Esophagus squamous epithelium (tissue), 5 donors: ENCODE measurements at regions of chr18 and their contacts with region 1.

Region 1: GRCh38 chr18:47254341-47254939 is 3.0 kb upstream of the SKOR2 start:
- DNase-seq: no peak
- H3K4me3 ChIP-seq: no peak overlapping the region
- H3K27ac ChIP-seq: no peak overlapping the region
- H3K4me1 ChIP-seq: no peaks in the 10 kb centered on the region
- H3K27me3 ChIP-seq: peaks cover 11 to 100% (median 15%) of the 10 kb centered on the region in 4 donors
- CTCF ChIP-seq: no peak
- POLR2A ChIP-seq: no peak

Region 2: GRCh38 chr18:46910856-46911255 is 343.6 kb before region 1 on chr18:
- intact Hi-C with region 1: no loop called
- DNase-seq: no peak
- H3K4me3 ChIP-seq: no peak overlapping the region
- H3K27ac ChIP-seq: no peak overlapping the region
- H3K4me1 ChIP-seq: peaks cover 0 to 16% (median 0%) of the 10 kb centered on the region in 3 donors
- H3K27me3 ChIP-seq: no peaks in the 10 kb centered on the region
- CTCF ChIP-seq: no peak
- POLR2A ChIP-seq: no peak

Region 3: GRCh38 chr18:47313901-47314300 is 59.5 kb after region 1 on chr18:
- intact Hi-C with region 1: loop called (anchors 10 kb)
- DNase-seq: no peak
- H3K4me3 ChIP-seq: no peak overlapping the region
- H3K27ac ChIP-seq: no peak overlapping the region
- H3K4me1 ChIP-seq: no peaks in the 10 kb centered on the region
- H3K27me3 ChIP-seq: peaks cover 0 to 5% (median 0%) of the 10 kb centered on the region in 4 donors
- CTCF ChIP-seq: no peak
- POLR2A ChIP-seq: no peak

Region 4: GRCh38 chr18:47427923-47428637 is 173.6 kb after region 1 on chr18:
- intact Hi-C with region 1: no loop called
- DNase-seq: no peak
- H3K4me3 ChIP-seq: no peak overlapping the region
- H3K27ac ChIP-seq: no peak overlapping the region
- H3K4me1 ChIP-seq: no peaks in the 10 kb centered on the region
- H3K27me3 ChIP-seq: no peaks in the 10 kb centered on the region
- CTCF ChIP-seq: no peak
- POLR2A ChIP-seq: no peak